T-cell (primary cell): ENCODE measurements at regions of chr20 and their contacts with region 1.

Region 1: DNA sequence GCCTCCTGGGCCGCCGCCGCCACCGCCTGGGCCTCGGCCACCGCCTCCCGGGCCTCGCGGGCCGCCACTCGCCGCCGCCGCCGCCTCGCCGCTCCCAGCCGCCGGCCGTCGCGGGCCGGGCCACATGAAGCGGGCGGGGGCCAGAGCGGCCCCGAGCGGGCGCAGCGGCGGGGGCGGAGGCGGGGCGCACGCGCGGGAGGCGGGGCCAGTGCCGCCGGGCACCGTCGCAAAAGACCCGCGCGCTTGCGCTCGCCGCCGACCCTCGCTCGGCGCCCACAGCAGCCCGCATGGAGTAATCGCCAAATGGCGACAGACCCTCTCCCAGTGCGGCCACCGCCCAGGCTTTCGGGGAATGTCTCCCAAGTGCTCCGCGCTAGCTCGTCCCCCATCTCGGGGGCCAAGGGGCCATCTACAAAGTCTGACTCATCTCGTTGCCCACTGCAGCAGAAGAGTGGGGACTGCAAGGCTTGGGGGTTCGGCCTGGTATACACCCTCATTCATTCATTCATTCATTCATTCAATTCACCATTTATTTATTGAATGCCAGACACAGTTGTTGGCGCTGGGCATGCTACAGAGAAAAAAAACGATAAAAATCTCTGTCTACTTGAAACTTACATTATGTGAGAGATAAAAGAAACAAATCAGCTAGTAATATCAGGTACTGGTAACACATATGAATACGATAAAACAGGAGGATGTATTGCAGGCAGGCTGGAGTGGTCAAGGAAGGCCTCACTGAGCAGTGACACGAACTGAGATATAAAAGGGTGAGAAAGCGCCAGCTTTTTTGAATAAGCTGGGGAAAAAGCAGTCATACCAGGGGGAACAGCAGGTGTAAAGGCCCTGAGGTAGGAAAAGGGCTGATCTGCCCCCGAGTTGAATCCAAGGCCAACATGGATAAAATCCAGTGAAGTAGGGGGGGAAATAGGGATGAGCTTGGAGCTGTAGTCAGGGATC is at the start of gene B4GALT5:
- DNase-seq: peak in 34 of 35 experiments; percentile 9 to 81 (median 42)
- ATAC-seq: peak; percentile 89 to 91 (median 90)
- H3K4me3 ChIP-seq: peak within 1 kb of the TSS; percentile 84 to 88
- H3K4me3 Mint-ChIP-seq: peak within 1 kb of the TSS; percentile 86 to 91 (median 88)
- H3K27ac ChIP-seq: peak within 1 kb of the TSS; percentile 60
- H3K27ac Mint-ChIP-seq: peak within 1 kb of the TSS; percentile 76 to 84
- H3K4me1 ChIP-seq: peaks cover 4 to 16% of the 10 kb centered on the region in 2 experiments
- H3K4me1 Mint-ChIP-seq: peaks cover 36 to 54% (median 40%) of the 10 kb centered on the region in 3 donors
- H3K27me3 ChIP-seq: no peaks in the 10 kb centered on the region
- H3K27me3 Mint-ChIP-seq: peaks cover 0 to 3% of the 10 kb centered on the region in 2 donors
- total RNA-seq, gene B4GALT5: 4.6 to 11.9 (median 9.2) TPM

Region 2: GRCh38 chr20:49635166-49635565 is 78.9 kb before region 1 on chr20:
- CTCF ChIA-PET with region 1: no interaction called
- POLR2A ChIA-PET with region 1: no interaction called
- DNase-seq: no peak
- ATAC-seq: no peak
- H3K4me3 ChIP-seq: no peak overlapping the region
- H3K4me3 Mint-ChIP-seq: no peak overlapping the region
- H3K27ac ChIP-seq: no peak overlapping the region
- H3K27ac Mint-ChIP-seq: no peak overlapping the region
- H3K4me1 ChIP-seq: no peaks in the 10 kb centered on the region
- H3K4me1 Mint-ChIP-seq: peaks cover 0 to 3% (median 0%) of the 10 kb centered on the region in 3 donors
- H3K27me3 ChIP-seq: no peaks in the 10 kb centered on the region
- H3K27me3 Mint-ChIP-seq: no peaks in the 10 kb centered on the region

Region 3: DNA sequence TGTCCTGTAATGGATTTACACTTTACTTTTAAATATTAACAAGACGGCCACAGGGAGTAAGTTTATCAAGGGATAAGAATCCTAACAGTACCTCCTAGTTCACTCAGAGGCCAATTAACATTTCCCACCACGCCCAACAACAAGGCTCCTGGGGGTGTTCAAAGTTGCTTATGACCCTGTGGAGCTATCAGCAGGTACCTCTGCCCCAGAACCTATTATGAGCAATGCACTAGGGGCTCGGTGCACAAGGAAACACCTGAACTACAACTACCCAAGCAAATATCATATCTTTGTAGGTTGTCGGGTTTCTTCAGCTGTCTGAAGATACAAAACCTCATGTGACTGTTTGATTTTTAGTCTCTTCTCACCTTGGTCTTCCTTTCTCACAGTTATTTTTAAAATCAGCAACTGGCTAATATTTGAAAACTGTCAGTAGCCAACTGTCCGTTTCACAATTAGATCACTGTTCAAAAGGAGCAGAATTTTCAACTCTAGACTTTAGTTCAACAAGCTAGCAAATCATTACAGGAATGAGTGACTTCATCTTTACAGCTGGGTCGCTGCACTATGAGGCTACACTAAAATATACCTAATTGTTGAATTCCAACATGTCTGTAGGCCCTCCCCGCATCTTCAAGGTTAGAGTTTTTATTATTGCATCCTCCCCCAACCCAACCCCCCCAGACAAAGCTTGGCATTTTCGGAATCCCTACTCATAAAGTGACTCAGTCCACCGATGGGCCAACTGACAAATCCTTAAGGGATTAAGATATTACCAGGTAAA is 38.5 kb before region 1 on chr20:
- CTCF ChIA-PET with region 1: interaction called in 1 of 2 experiments, 11 read pairs
- POLR2A ChIA-PET with region 1: interaction called in 1 of 2 experiments, 4 read pairs
- DNase-seq: no peak
- ATAC-seq: no peak
- H3K4me3 ChIP-seq: no peak overlapping the region
- H3K4me3 Mint-ChIP-seq: no peak overlapping the region
- H3K27ac ChIP-seq: peak overlapping the region; percentile 85
- H3K27ac Mint-ChIP-seq: peak overlapping the region; percentile 71 to 84
- H3K4me1 ChIP-seq: peaks cover 0 to 58% of the 10 kb centered on the region in 2 experiments
- H3K4me1 Mint-ChIP-seq: peaks cover 35 to 78% (median 64%) of the 10 kb centered on the region in 3 donors
- H3K27me3 ChIP-seq: no peaks in the 10 kb centered on the region
- H3K27me3 Mint-ChIP-seq: no peaks in the 10 kb centered on the region

Region 4: GRCh38 chr20:49699200-49699992 is 14.6 kb before region 1 on chr20:
- CTCF ChIA-PET with region 1: no interaction called
- POLR2A ChIA-PET with region 1: interaction called, 3 to 15 read pairs
- DNase-seq: peak in 1 of 35 experiments; percentile 51
- ATAC-seq: peak; percentile 54 to 75 (median 63)
- H3K4me3 ChIP-seq: no peak overlapping the region
- H3K4me3 Mint-ChIP-seq: peak overlapping the region; percentile 5 to 43 (median 37)
- H3K27ac ChIP-seq: no peak overlapping the region
- H3K27ac Mint-ChIP-seq: peak overlapping the region in 1 of 2 donors; percentile 60
- H3K4me1 ChIP-seq: peaks cover 0 to 35% of the 10 kb centered on the region in 2 experiments
- H3K4me1 Mint-ChIP-seq: peaks cover 35 to 68% (median 51%) of the 10 kb centered on the region in 3 donors
- H3K27me3 ChIP-seq: no peaks in the 10 kb centered on the region
- H3K27me3 Mint-ChIP-seq: no peaks in the 10 kb centered on the region

Region 5: GRCh38 chr20:49762940-49763766 is 49.1 kb after region 1 on chr20:
- CTCF ChIA-PET with region 1: no interaction called
- POLR2A ChIA-PET with region 1: no interaction called
- DNase-seq: no peak
- ATAC-seq: no peak
- H3K4me3 ChIP-seq: no peak overlapping the region
- H3K4me3 Mint-ChIP-seq: no peak overlapping the region
- H3K27ac ChIP-seq: no peak overlapping the region
- H3K27ac Mint-ChIP-seq: no peak overlapping the region
- H3K4me1 ChIP-seq: peaks cover 4 to 13% of the 10 kb centered on the region in 2 experiments
- H3K4me1 Mint-ChIP-seq: peaks cover 8 to 12% (median 10%) of the 10 kb centered on the region in 3 donors
- H3K27me3 ChIP-seq: peaks cover 2 to 21% of the 10 kb centered on the region in 2 experiments
- H3K27me3 Mint-ChIP-seq: peaks cover 50 to 58% of the 10 kb centered on the region in 2 donors